ENCODE measurements at regions of chr20 and their contacts with region 1.

Region 1: GRCh38 chr20:18632196-18633009 is 44.5 kb downstream of the DTD1 start:
- DNase-seq: peak; percentile 63
- H3K4me3 Mint-ChIP-seq: no peak overlapping the region
- H3K27ac Mint-ChIP-seq: peak overlapping the region; percentile 64
- H3K4me1 Mint-ChIP-seq: no peaks in the 10 kb centered on the region
- H3K27me3 Mint-ChIP-seq: no peaks in the 10 kb centered on the region
- CTCF ChIP-seq: peak; percentile 93

Region 2: DNA sequence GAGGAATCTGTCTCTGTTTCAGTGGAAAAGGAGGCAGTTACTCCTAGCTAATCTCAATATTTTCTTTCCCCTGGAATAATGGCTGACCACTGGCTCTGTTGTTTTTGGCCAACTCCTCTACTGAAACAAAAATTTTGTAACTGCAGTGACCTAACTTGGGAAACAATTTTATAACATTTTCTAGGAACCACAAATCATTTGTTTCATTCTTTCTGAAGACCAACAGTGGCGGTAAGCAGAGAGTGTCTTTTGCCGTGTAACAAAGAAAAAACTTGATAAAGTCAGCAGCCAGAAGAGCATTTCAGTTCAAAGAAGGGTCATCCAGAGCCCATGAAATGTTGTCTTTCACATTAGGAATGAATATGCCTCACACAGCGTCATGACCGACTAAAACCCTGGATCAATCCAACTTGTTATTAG is 1089.4 kb before region 1 on chr20:
- CTCF ChIA-PET with region 1: no interaction called
- POLR2A ChIA-PET with region 1: no interaction called
- intact Hi-C with region 1: no loop called
- DNase-seq: peak; percentile 71
- H3K4me3 Mint-ChIP-seq: no peak overlapping the region
- H3K27ac Mint-ChIP-seq: no peak overlapping the region
- H3K4me1 Mint-ChIP-seq: peaks cover 27% of the 10 kb centered on the region
- H3K27me3 Mint-ChIP-seq: no peaks in the 10 kb centered on the region
- CTCF ChIP-seq: no peak

Region 3: DNA sequence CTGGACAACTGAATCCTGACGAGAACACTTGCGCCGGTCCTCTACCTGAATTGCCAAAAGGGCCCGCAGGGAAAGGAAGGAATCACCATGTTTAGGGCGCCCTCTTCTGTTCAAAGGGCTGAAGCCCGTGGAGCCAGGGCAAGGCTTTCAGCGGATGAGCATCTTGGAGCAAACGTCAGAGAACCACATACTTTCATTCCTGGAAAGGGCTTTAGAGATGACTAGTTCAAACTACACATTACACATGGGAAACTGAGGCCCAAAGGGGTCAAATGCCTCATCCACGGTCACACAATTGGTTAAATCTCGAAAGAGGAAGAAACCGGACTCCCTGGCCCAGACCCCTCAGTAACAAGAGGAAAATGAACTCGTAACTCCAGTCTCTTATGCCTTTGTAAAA is 355.6 kb before region 1 on chr20:
- CTCF ChIA-PET with region 1: no interaction called
- POLR2A ChIA-PET with region 1: no interaction called
- intact Hi-C with region 1: no loop called
- DNase-seq: peak; percentile 85
- H3K4me3 Mint-ChIP-seq: no peak overlapping the region
- H3K27ac Mint-ChIP-seq: no peak overlapping the region
- H3K4me1 Mint-ChIP-seq: peaks cover 19% of the 10 kb centered on the region
- H3K27me3 Mint-ChIP-seq: peaks cover 12% of the 10 kb centered on the region
- CTCF ChIP-seq: peak; percentile 77

Region 4: GRCh38 chr20:18412221-18412901 is 220.0 kb before region 1 on chr20:
- CTCF ChIA-PET with region 1: interaction called, 7 read pairs
- POLR2A ChIA-PET with region 1: no interaction called
- intact Hi-C with region 1: loop called (anchors 5 kb)
- DNase-seq: no peak
- H3K4me3 Mint-ChIP-seq: no peak overlapping the region
- H3K27ac Mint-ChIP-seq: no peak overlapping the region
- H3K4me1 Mint-ChIP-seq: no peaks in the 10 kb centered on the region
- H3K27me3 Mint-ChIP-seq: no peaks in the 10 kb centered on the region
- CTCF ChIP-seq: no peak

Region 5: DNA sequence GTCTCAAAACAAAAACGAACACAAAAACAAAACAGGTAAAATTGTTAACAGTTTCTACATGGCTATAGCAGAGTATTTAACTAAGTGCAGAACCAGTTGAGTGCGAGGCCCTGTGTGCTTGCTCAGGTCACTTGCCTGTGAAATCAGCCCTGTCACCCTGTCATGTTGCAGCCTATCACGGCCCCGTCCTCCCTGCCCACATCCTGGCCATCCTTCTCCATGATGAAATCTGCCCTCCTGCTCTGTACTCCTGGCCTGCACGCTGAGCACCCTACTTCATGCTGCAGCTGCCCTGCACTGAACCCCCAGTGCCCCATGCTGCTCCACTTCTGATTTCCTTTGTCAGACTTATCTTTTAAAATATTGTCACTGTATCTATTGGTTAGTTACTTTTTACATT is 17.8 kb after region 1 on chr20:
- CTCF ChIA-PET with region 1: interaction called, 29 read pairs
- POLR2A ChIA-PET with region 1: interaction called, 3 read pairs
- intact Hi-C with region 1: no loop called
- DNase-seq: no peak
- H3K4me3 Mint-ChIP-seq: no peak overlapping the region
- H3K27ac Mint-ChIP-seq: no peak overlapping the region
- H3K4me1 Mint-ChIP-seq: no peaks in the 10 kb centered on the region
- H3K27me3 Mint-ChIP-seq: no peaks in the 10 kb centered on the region
- CTCF ChIP-seq: no peak

Region 6: DNA sequence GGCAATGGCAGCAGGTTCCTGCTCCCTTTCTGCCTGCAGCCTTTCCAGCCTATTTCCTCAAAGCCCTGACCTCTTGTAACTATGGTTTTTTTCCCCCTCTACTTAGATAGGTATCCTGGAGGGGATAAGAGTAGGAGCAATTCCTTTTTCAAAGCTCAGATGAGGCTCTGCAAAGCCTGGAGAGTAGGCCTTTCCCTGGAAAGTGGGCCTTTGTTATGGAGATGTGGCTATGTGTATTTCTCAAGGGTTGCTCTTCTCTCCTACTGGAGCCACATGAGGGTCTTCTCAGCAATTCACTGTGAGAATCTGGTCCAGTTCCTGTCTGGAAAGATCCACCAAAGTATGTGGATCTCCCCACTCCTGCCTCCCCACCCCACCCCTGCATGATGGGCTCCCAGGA is 51.4 kb after region 1 on chr20:
- CTCF ChIA-PET with region 1: interaction called, 16 read pairs
- POLR2A ChIA-PET with region 1: no interaction called
- intact Hi-C with region 1: no loop called
- DNase-seq: no peak
- H3K4me3 Mint-ChIP-seq: no peak overlapping the region
- H3K27ac Mint-ChIP-seq: no peak overlapping the region
- H3K4me1 Mint-ChIP-seq: no peaks in the 10 kb centered on the region
- H3K27me3 Mint-ChIP-seq: no peaks in the 10 kb centered on the region
- CTCF ChIP-seq: no peak

Region 7: GRCh38 chr20:18793625-18794427 is 161.4 kb after region 1 on chr20:
- CTCF ChIA-PET with region 1: interaction called, 6 read pairs
- POLR2A ChIA-PET with region 1: no interaction called
- intact Hi-C with region 1: loop called (anchors 1 kb)
- DNase-seq: peak; percentile 89
- H3K4me3 Mint-ChIP-seq: peak overlapping the region; percentile 97
- H3K27ac Mint-ChIP-seq: peak overlapping the region; percentile 99
- H3K4me1 Mint-ChIP-seq: no peaks in the 10 kb centered on the region
- H3K27me3 Mint-ChIP-seq: no peaks in the 10 kb centered on the region
- CTCF ChIP-seq: no peak

Region 8: DNA sequence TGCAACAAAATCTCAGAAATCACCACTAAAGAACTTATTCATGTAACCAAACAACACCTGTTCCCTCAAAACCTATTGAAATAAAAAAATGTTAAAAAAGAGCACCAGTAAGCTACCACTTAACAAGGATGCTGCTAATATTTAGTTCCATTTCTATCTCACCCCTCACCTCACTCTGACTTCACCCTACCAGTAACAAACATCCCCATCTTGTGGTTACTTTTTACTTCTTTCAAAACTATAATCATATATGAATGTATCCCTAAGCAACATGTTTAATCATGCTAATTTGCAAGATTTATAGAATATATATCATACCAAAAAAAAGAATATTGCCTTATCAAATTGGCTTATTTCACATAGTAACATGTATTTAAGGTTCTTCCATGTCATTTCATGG is 552.7 kb after region 1 on chr20:
- CTCF ChIA-PET with region 1: interaction called, 5 read pairs
- POLR2A ChIA-PET with region 1: no interaction called
- intact Hi-C with region 1: loop called (anchors 1 kb)
- DNase-seq: no peak
- H3K4me3 Mint-ChIP-seq: no peak overlapping the region
- H3K27ac Mint-ChIP-seq: no peak overlapping the region
- H3K4me1 Mint-ChIP-seq: no peaks in the 10 kb centered on the region
- H3K27me3 Mint-ChIP-seq: no peaks in the 10 kb centered on the region
- CTCF ChIP-seq: no peak

Region 9: GRCh38 chr20:19205977-19206396 is 573.6 kb after region 1 on chr20:
- CTCF ChIA-PET with region 1: interaction called, 22 read pairs
- POLR2A ChIA-PET with region 1: no interaction called
- intact Hi-C with region 1: no loop called
- DNase-seq: peak; percentile 69
- H3K4me3 Mint-ChIP-seq: no peak overlapping the region
- H3K27ac Mint-ChIP-seq: no peak overlapping the region
- H3K4me1 Mint-ChIP-seq: no peaks in the 10 kb centered on the region
- H3K27me3 Mint-ChIP-seq: peaks cover 25% of the 10 kb centered on the region
- CTCF ChIP-seq: peak; percentile 84